Activated CD8-positive, alpha-beta T cell treated with anti-CD3 and anti-CD28 coated beads for 36 hours (primary cell): ENCODE measurements at regions of chr2 and their contacts with region 1.

Region 1: GRCh38 chr2:42859006-42859552 is 66.7 kb upstream of the HAAO start:
- DNase-seq: peak; percentile 87
- ATAC-seq: peak; percentile 79
- H3K4me3 Mint-ChIP-seq: no peak overlapping the region
- H3K27ac Mint-ChIP-seq: no peak overlapping the region
- H3K4me1 Mint-ChIP-seq: no peaks in the 10 kb centered on the region
- H3K27me3 Mint-ChIP-seq: no peaks in the 10 kb centered on the region
- CTCF ChIP-seq: peak; percentile 99

Region 2: GRCh38 chr2:42624047-42624446 is 235.0 kb before region 1 on chr2:
- CTCF ChIA-PET with region 1: no interaction called
- POLR2A ChIA-PET with region 1: no interaction called
- intact Hi-C with region 1: no loop called
- DNase-seq: no peak
- ATAC-seq: no peak
- H3K4me3 Mint-ChIP-seq: no peak overlapping the region
- H3K27ac Mint-ChIP-seq: no peak overlapping the region
- H3K4me1 Mint-ChIP-seq: peaks cover 2% of the 10 kb centered on the region
- H3K27me3 Mint-ChIP-seq: no peaks in the 10 kb centered on the region
- CTCF ChIP-seq: no peak

Region 3: DNA sequence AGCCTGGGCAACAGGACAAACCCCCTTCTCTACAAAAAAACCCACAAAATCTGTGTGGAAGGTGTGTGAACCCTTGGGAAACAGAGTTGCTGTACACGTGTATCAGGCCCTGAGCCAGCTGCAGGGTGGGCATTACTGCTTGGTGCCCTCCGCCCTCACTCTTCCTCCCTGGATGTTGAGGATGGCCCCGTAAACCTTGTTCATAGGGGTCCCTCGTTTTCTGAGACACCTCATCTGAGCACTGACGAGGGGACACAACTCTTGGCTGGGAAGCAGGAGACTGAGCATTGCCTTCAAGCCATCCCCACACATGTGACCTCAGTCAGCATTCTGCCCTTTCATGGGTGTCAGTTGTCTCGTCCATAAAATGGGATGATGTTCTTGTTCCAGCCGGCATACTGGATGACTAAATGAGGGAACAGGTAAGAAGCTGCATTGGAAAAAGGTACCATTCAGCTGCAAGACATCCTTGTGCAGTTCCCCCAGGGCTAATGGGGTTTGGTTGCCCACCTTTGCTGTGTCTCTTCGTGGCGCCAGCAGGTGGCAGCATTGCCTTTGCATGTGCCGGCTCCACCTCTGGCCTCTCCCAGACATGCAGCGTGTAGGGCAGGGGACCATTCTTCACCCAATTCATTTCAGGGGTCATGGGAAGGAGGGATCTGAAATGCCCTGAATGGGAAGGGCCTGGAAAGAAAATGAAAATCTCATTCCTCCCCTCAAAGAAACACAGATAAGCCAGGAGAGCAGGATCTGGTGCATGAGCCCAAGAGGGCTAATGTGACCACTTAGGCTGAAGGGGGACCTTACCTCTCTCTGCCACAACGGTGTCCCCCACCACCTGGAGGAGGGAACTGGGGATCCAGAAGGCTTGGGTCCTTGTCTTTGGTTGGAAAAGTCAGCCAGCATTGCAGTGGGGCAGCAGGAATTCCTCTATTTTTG is 30.3 kb before region 1 on chr2:
- CTCF ChIA-PET with region 1: interaction called, 36 read pairs
- POLR2A ChIA-PET with region 1: no interaction called
- intact Hi-C with region 1: no loop called
- DNase-seq: peak; percentile 79
- ATAC-seq: peak; percentile 95
- H3K4me3 Mint-ChIP-seq: no peak overlapping the region
- H3K27ac Mint-ChIP-seq: no peak overlapping the region
- H3K4me1 Mint-ChIP-seq: peaks cover 16% of the 10 kb centered on the region
- H3K27me3 Mint-ChIP-seq: peaks cover 3% of the 10 kb centered on the region
- CTCF ChIP-seq: peak; percentile 85

Region 4: GRCh38 chr2:42871370-42871769 is 12.3 kb after region 1 on chr2:
- CTCF ChIA-PET with region 1: interaction called, 11 read pairs
- POLR2A ChIA-PET with region 1: no interaction called
- intact Hi-C with region 1: no loop called
- DNase-seq: no peak
- ATAC-seq: no peak
- H3K4me3 Mint-ChIP-seq: no peak overlapping the region
- H3K27ac Mint-ChIP-seq: no peak overlapping the region
- H3K4me1 Mint-ChIP-seq: no peaks in the 10 kb centered on the region
- H3K27me3 Mint-ChIP-seq: no peaks in the 10 kb centered on the region
- CTCF ChIP-seq: no peak

Region 5: GRCh38 chr2:42910645-42911405 is 51.7 kb after region 1 on chr2:
- CTCF ChIA-PET with region 1: interaction called, 10 read pairs
- POLR2A ChIA-PET with region 1: no interaction called
- intact Hi-C with region 1: no loop called
- DNase-seq: no peak
- ATAC-seq: no peak
- H3K4me3 Mint-ChIP-seq: no peak overlapping the region
- H3K27ac Mint-ChIP-seq: no peak overlapping the region
- H3K4me1 Mint-ChIP-seq: peaks cover 6% of the 10 kb centered on the region
- H3K27me3 Mint-ChIP-seq: peaks cover 1% of the 10 kb centered on the region
- CTCF ChIP-seq: no peak

Region 6: DNA sequence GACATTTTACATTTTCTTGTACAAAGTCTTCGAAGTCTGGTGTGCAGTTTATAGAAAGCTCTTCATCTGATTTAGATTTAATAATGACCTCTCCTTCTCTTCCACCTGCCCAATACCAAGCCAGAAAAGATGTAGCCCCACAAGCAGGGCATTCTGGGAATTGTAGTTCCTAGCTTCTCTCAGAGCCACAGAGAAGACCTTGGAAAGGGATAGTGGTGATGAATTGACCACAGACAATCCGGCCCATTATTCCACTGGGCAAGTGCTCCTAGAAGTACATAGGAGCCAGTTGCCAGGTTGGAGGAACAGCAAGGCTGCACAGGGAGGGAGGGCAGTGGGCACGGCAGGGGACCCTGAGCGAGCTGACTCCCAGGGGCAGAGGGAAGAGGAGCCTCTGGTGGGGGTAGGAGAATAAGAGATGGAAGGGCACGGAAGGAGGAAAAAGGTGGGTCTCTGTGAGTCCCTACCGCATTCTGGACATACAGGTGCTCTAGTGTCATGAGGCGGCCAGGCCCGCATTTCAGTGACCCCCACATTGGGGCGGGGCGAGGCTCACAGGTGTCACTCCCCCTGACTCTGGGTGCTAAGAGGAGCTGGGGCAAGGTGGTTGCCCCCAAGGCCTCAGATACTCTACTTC is 85.8 kb after region 1 on chr2:
- CTCF ChIA-PET with region 1: interaction called, 17 read pairs
- POLR2A ChIA-PET with region 1: no interaction called
- intact Hi-C with region 1: no loop called
- DNase-seq: no peak
- ATAC-seq: no peak
- H3K4me3 Mint-ChIP-seq: no peak overlapping the region
- H3K27ac Mint-ChIP-seq: no peak overlapping the region
- H3K4me1 Mint-ChIP-seq: peaks cover 2% of the 10 kb centered on the region
- H3K27me3 Mint-ChIP-seq: no peaks in the 10 kb centered on the region
- CTCF ChIP-seq: no peak

Region 7: GRCh38 chr2:43376523-43377198 is 517.6 kb after region 1 on chr2:
- CTCF ChIA-PET with region 1: no interaction called
- POLR2A ChIA-PET with region 1: no interaction called
- intact Hi-C with region 1: no loop called
- DNase-seq: no peak
- ATAC-seq: no peak
- H3K4me3 Mint-ChIP-seq: no peak overlapping the region
- H3K27ac Mint-ChIP-seq: no peak overlapping the region
- H3K4me1 Mint-ChIP-seq: peaks cover 11% of the 10 kb centered on the region
- H3K27me3 Mint-ChIP-seq: no peaks in the 10 kb centered on the region
- CTCF ChIP-seq: no peak